Colonic mucosa (tissue), 4 donors: ENCODE measurements at regions of chr14 and their contacts with region 1.

Region 1: GRCh38 chr14:38867561-38868150 is 235.4 kb downstream of the SEC23A start:
- DNase-seq: peak; percentile 85
- H3K4me3 ChIP-seq: no peak overlapping the region
- H3K27ac ChIP-seq: no peak overlapping the region
- H3K4me1 ChIP-seq: no peaks in the 10 kb centered on the region
- H3K27me3 ChIP-seq: no peaks in the 10 kb centered on the region
- CTCF ChIP-seq: peak; percentile 78

Region 2: GRCh38 chr14:37903343-37904191 is 964.1 kb before region 1 on chr14:
- intact Hi-C with region 1: loop called (anchors 10 kb)
- DNase-seq: no peak
- H3K4me3 ChIP-seq: no peak overlapping the region
- H3K27ac ChIP-seq: no peak overlapping the region
- H3K4me1 ChIP-seq: no peaks in the 10 kb centered on the region
- H3K27me3 ChIP-seq: no peaks in the 10 kb centered on the region
- CTCF ChIP-seq: peak; percentile 53

Region 3: DNA sequence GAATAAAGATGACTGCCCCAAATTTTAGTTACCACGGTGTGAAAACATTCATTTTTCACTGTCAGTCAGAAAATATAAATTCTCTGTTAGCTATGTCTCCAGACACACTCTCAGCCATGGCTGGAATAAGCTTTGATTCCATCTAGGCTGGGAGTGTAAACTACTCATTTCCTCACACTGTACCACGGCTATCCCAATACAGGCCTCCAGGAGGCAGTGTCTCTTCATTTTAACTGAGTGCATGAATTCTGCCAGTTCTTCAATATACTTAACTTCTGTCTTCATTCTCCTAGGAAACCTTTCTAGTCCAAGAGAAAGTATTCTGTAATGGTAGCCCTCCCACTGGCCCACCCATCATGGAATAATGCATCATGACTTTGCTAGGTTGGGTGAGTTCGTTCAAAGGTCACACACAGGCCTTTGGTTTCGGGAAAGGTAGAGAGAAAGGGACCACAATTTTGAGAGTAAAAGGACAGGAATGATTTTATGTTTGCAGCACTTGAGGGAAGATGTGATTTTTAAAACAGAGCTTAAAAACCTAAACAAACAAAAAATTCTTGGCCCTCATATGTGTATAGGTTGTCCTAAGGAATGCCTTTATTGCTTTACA is 145.7 kb before region 1 on chr14:
- intact Hi-C with region 1: loop called (anchors 5 kb)
- DNase-seq: peak; percentile 86
- H3K4me3 ChIP-seq: no peak overlapping the region
- H3K27ac ChIP-seq: no peak overlapping the region
- H3K4me1 ChIP-seq: no peaks in the 10 kb centered on the region
- H3K27me3 ChIP-seq: no peaks in the 10 kb centered on the region
- CTCF ChIP-seq: peak; percentile 73